Breast epithelium (tissue), 4 donors: ENCODE measurements at regions of chr4 and their contacts with region 1.

Region 1: GRCh38 chr4:12729384-12729783 is 754.8 kb downstream of the RAB28 start:
- DNase-seq: no peak
- H3K4me3 ChIP-seq: no peak overlapping the region
- H3K27ac ChIP-seq: no peak overlapping the region
- H3K4me1 ChIP-seq: no peaks in the 10 kb centered on the region
- H3K27me3 ChIP-seq: peaks cover 0 to 9% of the 10 kb centered on the region in 2 donors
- CTCF ChIP-seq: peak in 1 of 3 donors; percentile 14
- POLR2A ChIP-seq: no peak

Region 2: DNA sequence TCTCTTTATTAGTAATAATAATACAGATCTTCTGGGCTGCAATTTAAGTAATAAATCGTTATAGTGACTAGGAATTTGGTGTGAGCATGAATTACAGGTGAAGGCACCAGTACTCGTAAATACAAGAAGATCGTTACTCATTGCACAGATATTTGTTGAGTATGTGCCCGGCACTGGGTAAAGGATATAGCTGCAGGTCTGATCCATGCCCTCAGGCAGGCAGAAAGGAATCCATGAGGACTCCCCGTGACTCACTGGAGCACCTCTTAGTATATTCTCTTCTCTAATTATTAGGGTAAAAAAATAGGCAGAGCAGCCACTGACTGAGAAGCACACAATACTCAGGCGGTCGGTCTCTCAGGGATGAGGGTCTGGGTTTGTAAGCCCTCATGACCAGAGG is 113.6 kb before region 1 on chr4:
- intact Hi-C with region 1: loop called (anchors 5 kb)
- DNase-seq: no peak
- H3K4me3 ChIP-seq: no peak overlapping the region
- H3K27ac ChIP-seq: no peak overlapping the region
- H3K4me1 ChIP-seq: no peaks in the 10 kb centered on the region
- H3K27me3 ChIP-seq: no peaks in the 10 kb centered on the region
- CTCF ChIP-seq: no peak
- POLR2A ChIP-seq: no peak

Region 3: DNA sequence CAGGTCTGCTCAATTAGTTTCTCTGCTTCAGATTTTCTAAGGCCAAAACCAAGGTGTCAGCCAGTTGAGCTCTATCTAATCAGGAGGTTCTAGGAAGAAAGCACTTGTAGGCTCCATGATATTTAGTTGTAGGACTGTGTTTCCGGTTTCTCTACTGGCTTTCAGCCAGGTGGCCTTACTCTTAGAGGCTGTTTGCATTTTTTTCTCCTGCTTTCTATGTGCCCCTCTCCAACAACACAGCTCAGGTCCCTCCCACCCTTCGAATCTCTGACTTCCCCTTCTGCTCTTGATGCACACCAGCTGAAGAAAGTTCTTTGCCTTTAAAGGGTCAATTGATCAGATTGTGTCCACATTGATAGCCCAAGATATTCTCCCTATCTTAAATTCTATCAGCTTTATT is 509.6 kb after region 1 on chr4:
- intact Hi-C with region 1: loop called (anchors 5 kb)
- DNase-seq: no peak
- H3K4me3 ChIP-seq: no peak overlapping the region
- H3K27ac ChIP-seq: no peak overlapping the region
- H3K4me1 ChIP-seq: no peaks in the 10 kb centered on the region
- H3K27me3 ChIP-seq: no peaks in the 10 kb centered on the region
- CTCF ChIP-seq: no peak
- POLR2A ChIP-seq: no peak

Region 4: GRCh38 chr4:13766761-13767540 is 1037.6 kb after region 1 on chr4:
- intact Hi-C with region 1: no loop called
- DNase-seq: no peak
- H3K4me3 ChIP-seq: no peak overlapping the region
- H3K27ac ChIP-seq: no peak overlapping the region
- H3K4me1 ChIP-seq: no peaks in the 10 kb centered on the region
- H3K27me3 ChIP-seq: no peaks in the 10 kb centered on the region
- CTCF ChIP-seq: no peak
- POLR2A ChIP-seq: no peak